Posterior vena cava (tissue), 2 donors: ENCODE measurements at regions of chr1 and their contacts with region 1.

Region 1: DNA sequence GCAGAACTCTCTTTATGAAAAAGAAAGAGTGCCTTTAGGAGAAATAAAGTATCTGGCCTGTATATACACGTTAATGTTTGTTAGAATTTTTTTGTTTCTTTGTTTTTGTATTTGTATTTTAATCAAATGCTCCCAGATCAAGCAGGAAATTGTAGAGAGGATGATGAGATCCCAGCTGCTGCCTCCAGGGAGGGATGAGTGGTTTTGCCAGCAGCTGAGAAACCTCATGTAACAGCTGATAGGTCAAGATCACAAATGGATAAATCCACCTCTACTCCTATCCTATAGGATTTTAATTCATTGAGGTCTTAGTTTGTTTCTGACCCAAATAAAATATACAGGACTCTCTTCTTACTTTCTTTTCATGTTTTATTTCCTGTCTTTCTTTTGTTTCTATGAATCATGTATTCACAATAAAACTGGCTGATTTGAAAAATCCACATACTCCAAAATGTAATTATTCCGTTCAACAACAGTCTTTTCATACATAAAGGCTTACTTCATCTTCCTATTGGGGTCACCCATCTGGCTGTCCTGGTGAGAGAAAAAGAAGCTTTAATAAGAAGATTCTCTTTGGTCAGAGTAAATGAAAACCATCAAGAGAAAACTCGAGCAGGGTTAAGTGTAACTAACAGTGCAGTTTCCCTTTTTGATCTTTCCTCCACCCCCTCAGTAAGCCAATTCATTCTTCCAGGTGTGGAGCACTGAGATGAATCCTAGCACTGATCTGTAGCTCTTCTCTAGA is 129.3 kb upstream of the PLPPR5 start:
- DNase-seq: no peak

Region 2: DNA sequence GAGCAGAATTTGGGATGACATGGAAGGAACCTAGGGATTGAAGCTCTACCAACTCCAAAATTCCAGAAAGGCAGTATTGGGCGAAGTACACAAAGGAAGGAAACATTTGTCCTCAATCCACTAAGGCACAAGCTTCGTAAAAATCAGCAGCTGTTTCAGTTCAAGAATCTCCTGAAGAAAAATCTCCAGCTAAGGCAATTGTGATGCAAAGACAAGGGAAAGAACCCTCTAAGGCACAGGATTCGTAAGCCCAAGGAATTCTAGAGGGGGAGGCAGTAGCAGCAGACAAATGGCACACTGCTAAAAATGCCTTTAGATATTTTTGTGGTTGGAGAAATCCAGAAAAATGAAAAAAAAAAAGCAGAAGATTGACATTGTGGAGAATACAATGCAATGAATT is 64.8 kb before region 1 on chr1:
- intact Hi-C with region 1: no loop called
- DNase-seq: no peak

Region 3: GRCh38 chr1:99207216-99207615 is 73.3 kb after region 1 on chr1:
- intact Hi-C with region 1: loop called in 1 of 2 experiments (anchors 2 kb)
- DNase-seq: no peak

Region 4: GRCh38 chr1:99239694-99240093 is 105.8 kb after region 1 on chr1:
- intact Hi-C with region 1: no loop called
- DNase-seq: no peak